Cardiac septum (tissue), 1 donor: ENCODE measurements at regions of chr3 and their contacts with region 1.

Region 1: DNA sequence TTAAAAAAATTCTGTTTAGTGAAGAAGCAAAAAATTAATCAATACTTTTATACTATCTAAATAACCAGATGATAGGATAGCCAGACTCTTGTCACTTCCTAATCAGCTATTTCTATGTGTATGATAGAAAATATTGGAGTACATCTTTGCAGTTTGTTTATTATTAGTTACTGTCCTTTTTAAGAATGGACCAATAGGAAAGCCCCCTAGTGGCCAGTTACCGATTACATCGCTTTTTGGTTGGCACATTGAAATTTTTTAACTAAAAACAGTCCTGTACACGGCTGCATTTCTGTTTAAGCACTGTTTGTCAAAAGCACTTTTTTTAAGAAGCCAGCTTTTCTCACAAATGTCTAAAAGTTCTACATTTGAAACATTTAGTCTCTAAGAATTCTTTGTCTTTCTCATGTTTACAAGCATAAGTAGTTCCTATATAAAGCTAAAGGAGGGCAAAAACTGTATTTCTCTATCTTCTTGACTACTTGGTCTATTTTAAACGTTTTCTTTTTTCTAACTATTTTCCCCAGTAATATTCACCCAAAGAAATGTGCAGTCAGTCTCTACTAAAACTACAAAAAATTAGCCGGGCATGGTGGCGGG is 253.2 kb upstream of the LRTM1 start:
- DNase-seq: no peak

Region 2: DNA sequence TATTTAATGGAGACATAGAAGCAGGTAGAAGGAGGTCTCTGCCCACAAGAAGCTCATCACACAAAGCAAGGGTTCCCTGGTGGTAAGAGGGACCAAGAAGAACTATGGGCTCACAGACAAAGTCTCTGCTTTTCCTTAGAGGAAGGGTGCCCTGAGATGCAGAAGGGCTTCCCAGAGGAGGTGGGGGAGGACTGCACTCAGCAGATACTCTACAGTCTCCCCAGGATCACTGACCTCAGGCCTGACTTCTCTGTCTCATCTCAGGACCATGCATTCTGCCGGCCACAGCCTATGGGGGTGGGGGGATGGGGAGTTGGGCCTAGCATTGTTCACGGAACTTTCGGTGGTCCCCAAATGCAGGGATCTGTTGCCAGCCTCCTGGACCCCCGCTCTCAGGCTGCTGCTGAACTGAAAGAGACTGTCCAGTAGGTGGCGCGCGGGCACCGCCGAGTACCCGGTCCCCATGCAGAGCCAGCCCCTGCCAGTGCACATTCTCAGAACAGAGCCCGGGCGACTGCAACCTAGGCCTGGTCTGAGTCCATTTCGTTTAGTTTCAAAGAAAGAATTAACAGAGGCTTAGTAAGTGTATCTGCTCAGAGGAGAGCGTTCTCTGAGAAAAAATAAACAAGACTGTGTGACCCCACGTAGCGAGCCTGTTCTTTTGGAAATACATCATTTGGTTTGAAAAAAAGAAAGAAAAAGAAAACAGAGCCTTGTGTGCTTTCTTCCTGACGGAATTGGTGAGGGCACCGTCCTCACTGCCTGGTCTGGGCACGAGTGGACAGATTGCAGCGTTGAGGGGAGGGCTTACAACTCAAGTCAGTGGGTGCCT is 327.2 kb before region 1 on chr3:
- intact Hi-C with region 1: loop called (anchors 5 kb)
- DNase-seq: peak; percentile 81

Region 3: DNA sequence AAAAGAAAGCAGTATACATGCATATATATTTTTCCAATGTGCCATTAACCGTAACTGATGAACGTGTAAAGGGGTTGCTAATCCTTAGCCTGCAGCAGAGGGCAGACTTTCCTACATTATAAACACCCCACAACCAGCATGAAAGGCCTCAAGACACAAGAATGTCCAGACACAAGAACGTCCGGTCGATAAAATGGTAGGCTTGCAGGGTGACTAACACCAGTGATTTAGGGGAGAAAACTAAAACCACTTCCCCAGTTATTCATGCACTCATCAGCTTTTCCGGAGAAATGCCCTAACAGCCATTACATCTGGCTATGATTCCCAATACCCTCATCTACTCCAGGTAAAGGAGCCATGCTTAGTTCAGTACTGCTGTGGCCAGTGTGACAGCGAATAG is 310.6 kb before region 1 on chr3:
- intact Hi-C with region 1: loop called (anchors 5 kb)
- DNase-seq: no peak

Region 4: GRCh38 chr3:54951405-54951804 is 229.6 kb before region 1 on chr3:
- intact Hi-C with region 1: loop called (anchors 5 kb)
- DNase-seq: peak; percentile 83